Ascending aorta (tissue), 2 donors: ENCODE measurements at regions of chr12 and their contacts with region 1.

Region 1: DNA sequence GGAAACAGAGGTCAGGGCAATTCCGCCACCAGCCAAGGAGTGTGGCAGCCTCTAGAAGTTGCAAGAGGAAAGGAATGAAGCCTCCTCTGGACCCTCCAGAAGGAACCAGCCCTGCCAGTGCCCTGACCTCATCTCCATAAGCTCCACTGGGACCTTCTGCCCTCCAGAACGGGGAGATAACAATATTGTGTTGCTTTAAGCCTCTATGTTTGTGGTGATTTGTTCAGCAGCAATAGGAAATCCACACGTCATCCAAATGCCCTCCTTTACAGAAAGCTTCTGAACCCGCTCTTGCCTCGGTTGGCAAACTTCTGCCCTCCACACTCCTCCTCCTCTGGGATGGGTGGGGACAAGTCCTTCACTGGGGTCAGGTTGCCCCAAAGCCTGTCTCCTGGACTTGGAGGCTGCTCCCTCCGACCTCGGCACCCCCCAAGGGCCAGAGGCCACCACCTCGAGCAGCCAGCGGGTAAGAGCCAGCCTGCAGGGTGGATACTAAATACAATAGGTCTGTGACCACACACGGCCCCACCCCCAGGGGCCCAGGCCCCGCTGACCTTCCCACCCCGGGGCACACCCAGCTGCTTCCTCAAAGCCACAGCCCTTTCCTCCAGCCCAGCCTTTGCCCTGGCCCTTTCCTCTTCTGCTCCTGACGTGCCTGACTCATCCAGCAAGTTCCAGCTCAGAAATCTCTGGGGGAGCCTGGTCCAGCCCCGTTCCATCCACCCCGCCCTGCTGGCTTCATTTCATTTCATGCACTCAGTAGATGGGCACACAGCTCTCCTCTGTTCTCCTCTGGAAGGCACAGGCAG is 58.7 kb upstream of the NCOR2 start:
- DNase-seq: peak; percentile 79 to 96
- H3K4me3 ChIP-seq: no peak overlapping the region
- H3K27ac ChIP-seq: peak overlapping the region; percentile 79 to 89
- H3K4me1 ChIP-seq: peaks cover 15 to 29% of the 10 kb centered on the region in 2 donors
- H3K27me3 ChIP-seq: no peaks in the 10 kb centered on the region
- CTCF ChIP-seq: no peak

Region 2: GRCh38 chr12:124694846-124695497 is 68.9 kb after region 1 on chr12:
- intact Hi-C with region 1: loop called (anchors 5 kb)
- DNase-seq: peak in 1 of 2 donors; percentile 83
- H3K4me3 ChIP-seq: no peak overlapping the region
- H3K27ac ChIP-seq: no peak overlapping the region
- H3K4me1 ChIP-seq: peaks cover 6 to 29% of the 10 kb centered on the region in 2 donors
- H3K27me3 ChIP-seq: no peaks in the 10 kb centered on the region
- CTCF ChIP-seq: no peak

Region 3: DNA sequence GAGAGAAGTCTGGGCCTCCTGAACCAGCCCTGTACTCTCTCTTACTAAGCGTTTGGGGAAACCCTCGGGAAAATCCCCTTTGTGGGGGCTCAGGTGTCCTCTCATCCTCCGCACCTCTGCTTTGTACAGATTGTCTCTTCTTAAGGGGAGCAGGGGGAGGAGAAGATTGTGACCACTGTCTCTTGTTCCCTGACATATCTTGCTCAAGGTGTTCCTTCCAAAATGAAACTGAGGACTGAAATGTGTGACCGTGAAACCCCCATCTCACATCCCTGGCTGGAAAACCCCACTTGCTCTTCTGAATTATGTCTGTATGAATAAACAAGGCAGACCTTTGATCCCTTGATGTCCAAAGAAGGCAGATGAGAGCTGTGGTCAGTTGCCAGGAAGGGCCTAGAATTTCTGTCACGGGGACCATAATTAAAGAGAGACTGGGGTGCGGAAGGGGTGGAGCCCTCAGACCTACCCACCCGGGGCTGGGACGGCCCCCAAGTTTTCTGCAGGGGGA is 808.9 kb after region 1 on chr12:
- intact Hi-C with region 1: no loop called
- DNase-seq: no peak
- H3K4me3 ChIP-seq: no peak overlapping the region
- H3K27ac ChIP-seq: no peak overlapping the region
- H3K4me1 ChIP-seq: no peaks in the 10 kb centered on the region
- H3K27me3 ChIP-seq: no peaks in the 10 kb centered on the region
- CTCF ChIP-seq: no peak